ENCODE measurements at regions of chr18 and their contacts with region 1.

Region 1: GRCh38 chr18:46155641-46156051 is 51.5 kb downstream of the HAUS1 start:
- DNase-seq: no peak
- ATAC-seq: no peak
- H3K4me3 ChIP-seq: no peak overlapping the region
- H3K4me3 Mint-ChIP-seq: no peak overlapping the region
- H3K27ac ChIP-seq: no peak overlapping the region
- H3K27ac Mint-ChIP-seq: no peak overlapping the region
- H3K4me1 ChIP-seq: peaks cover 10 to 18% of the 10 kb centered on the region in 2 donors
- H3K4me1 Mint-ChIP-seq: peaks cover 10% of the 10 kb centered on the region
- H3K27me3 ChIP-seq: no peaks in the 10 kb centered on the region
- H3K27me3 Mint-ChIP-seq: no peaks in the 10 kb centered on the region
- CTCF ChIP-seq: no peak

Region 2: DNA sequence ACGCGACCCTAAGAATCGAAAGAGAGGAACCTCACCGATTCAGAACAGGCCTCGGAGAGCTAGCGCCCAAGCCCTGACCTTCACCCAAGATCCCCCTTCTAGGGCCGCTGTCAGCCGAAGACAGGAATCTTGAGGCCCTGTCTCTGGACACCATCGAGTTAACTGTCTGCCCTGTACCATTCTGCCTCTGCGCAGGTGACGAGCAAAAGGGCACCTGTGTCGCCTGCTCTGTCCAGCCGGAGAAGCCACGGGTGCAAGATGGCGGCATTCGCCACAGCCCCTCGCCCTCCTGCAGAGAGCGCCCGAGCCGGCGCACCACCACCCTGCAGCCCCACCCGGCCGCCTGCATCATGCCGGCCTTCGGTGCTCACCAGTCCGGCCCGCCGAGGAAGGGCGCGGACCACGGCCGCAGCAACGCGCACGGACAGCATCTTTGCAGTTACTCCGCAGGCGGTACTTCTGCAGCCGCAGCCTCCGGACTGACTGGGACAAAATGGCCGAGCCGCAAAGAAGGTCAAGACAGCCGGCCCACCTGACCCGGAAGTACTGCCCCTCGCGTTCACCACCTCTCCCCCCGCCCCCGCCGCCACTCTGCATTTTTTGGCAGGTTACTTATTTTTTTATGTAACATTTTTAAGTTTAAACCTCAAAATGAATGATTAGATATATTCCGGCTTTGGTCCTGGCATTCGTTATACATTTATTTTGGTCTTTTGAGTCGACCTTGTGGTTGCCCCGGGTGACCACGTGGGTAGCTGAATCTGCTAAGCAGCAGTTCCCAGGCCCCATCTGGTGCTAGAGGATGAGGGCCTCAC is 57.6 kb before region 1 on chr18 and contains the start of gene ATP5F1A:
- CTCF ChIA-PET with region 1: no interaction called
- POLR2A ChIA-PET with region 1: interaction called, 12 read pairs
- intact Hi-C with region 1: no loop called
- DNase-seq: peak; percentile 94
- ATAC-seq: peak; percentile 88
- H3K4me3 ChIP-seq: peak within 1 kb of the TSS; percentile 66 to 80 (median 75)
- H3K4me3 Mint-ChIP-seq: peak within 1 kb of the TSS; percentile 99
- H3K27ac ChIP-seq: peak within 1 kb of the TSS; percentile 76 to 90
- H3K27ac Mint-ChIP-seq: peak within 1 kb of the TSS; percentile 97
- H3K4me1 ChIP-seq: peaks cover 25 to 26% of the 10 kb centered on the region in 2 donors
- H3K4me1 Mint-ChIP-seq: peaks cover 27% of the 10 kb centered on the region
- H3K27me3 ChIP-seq: no peaks in the 10 kb centered on the region
- H3K27me3 Mint-ChIP-seq: no peaks in the 10 kb centered on the region
- CTCF ChIP-seq: no peak
- total RNA-seq, gene ATP5F1A: 235 and 247 TPM in 2 replicates

Measured in B cell (primary cell).